Esophagus muscularis mucosa (tissue), 4 donors: ENCODE measurements at regions of chr6 and their contacts with region 1.

Region 1: GRCh38 chr6:166999145-166999883 is at the start of gene CEP43:
- DNase-seq: peak; percentile 97
- H3K4me3 ChIP-seq: peak within 1 kb of the TSS; percentile 87 to 99 (median 95)
- H3K27ac ChIP-seq: peak within 1 kb of the TSS; percentile 71 to 78 (median 72)
- H3K4me1 ChIP-seq: peaks cover 3 to 40% (median 34%) of the 10 kb centered on the region in 4 donors
- H3K27me3 ChIP-seq: no peaks in the 10 kb centered on the region
- CTCF ChIP-seq: peak; percentile 5 to 18 (median 12)
- EP300 ChIP-seq: no peak
- POLR2A ChIP-seq: no peak
- total RNA-seq, gene CEP43: 6.6 to 18.0 (median 8.3) TPM

Region 2: DNA sequence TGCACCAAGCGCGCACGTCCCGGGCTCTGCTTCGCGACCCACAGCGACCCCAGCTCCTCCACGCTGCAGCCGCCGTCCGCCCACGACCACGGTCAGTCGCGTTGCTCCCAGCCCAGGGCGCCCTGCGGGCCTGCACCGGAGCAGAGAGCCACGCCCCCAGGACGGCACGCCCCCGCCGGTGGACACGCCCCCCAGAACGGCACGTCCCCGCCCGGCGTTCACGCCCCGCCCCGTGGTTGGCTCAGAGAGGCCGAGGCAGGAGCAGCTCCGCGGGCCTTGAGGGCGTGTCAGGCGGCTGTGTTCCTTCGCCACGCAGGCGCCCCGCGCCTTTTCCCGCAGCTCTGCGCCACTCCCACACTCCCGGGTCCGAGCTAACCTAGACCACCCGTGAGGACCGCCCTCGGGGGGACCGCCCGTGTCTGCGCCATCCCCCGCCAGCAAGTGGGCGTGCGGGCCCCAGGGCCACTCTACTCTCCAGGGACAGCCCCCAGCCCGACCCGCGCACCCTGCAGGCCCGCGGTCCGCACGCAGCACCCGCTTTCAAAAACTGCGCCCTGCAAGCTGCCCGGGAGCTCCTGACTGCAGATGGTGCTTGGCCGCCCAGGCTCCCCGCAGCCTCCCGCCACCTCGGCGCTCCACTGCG is 42.7 kb before region 1 on chr6 and contains the start of gene RNASET2:
- intact Hi-C with region 1: loop called (anchors 2 kb)
- DNase-seq: peak; percentile 98
- H3K4me3 ChIP-seq: peak within 1 kb of the TSS; percentile 79 to 95 (median 83)
- H3K27ac ChIP-seq: peak within 1 kb of the TSS; percentile 85 to 91 (median 86)
- H3K4me1 ChIP-seq: peaks cover 14 to 36% (median 32%) of the 10 kb centered on the region in 4 donors
- H3K27me3 ChIP-seq: no peaks in the 10 kb centered on the region
- CTCF ChIP-seq: no peak
- EP300 ChIP-seq: no peak
- POLR2A ChIP-seq: peak; percentile 45
- total RNA-seq, gene RNASET2: 24.1 to 54.5 (median 30.4) TPM